PC-3 (cell line): ENCODE measurements at regions of chr12 and their contacts with region 1.

Region 1: GRCh38 chr12:118979763-118980406 is 1.5 kb upstream of the SRRM4 start:
- DNase-seq: peak; percentile 70
- ATAC-seq: peak; percentile 51
- H3K4me3 ChIP-seq: no peak overlapping the region
- H3K27ac ChIP-seq: no peak overlapping the region
- H3K4me1 ChIP-seq: no peaks in the 10 kb centered on the region
- H3K27me3 ChIP-seq: peaks cover 19% of the 10 kb centered on the region
- CTCF ChIP-seq: peak; percentile 86

Region 2: DNA sequence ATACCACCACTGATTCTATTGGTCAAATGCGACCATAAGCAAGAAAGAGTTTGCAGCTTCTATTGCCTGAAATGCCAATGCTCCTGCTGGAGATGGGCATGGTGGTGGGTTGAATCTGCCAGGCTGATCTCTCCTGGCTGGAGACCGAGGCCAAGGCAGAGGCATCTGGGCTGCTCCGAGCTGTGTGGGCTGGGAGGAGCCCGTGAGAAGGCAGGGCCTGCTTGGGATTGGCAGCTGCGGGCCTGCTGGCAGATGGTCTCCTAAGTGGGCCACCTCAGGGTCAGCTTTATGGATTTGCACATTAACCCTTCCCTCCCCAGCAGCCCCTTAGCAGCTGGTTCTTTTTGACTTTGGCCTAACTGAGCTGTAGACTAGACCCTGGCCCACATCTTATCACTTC is 26.9 kb after region 1 on chr12:
- CTCF ChIA-PET with region 1: no interaction called
- POLR2A ChIA-PET with region 1: no interaction called
- intact Hi-C with region 1: no loop called
- DNase-seq: no peak
- ATAC-seq: no peak
- H3K4me3 ChIP-seq: no peak overlapping the region
- H3K27ac ChIP-seq: no peak overlapping the region
- H3K4me1 ChIP-seq: no peaks in the 10 kb centered on the region
- H3K27me3 ChIP-seq: peaks cover 10% of the 10 kb centered on the region; the same call in 1 of the 2 replicates
- CTCF ChIP-seq: no peak

Region 3: GRCh38 chr12:119113496-119113986 is 133.7 kb after region 1 on chr12:
- CTCF ChIA-PET with region 1: no interaction called
- POLR2A ChIA-PET with region 1: no interaction called
- intact Hi-C with region 1: no loop called
- DNase-seq: no peak
- ATAC-seq: no peak
- H3K4me3 ChIP-seq: no peak overlapping the region
- H3K27ac ChIP-seq: no peak overlapping the region
- H3K4me1 ChIP-seq: no peaks in the 10 kb centered on the region
- H3K27me3 ChIP-seq: peaks cover 10% of the 10 kb centered on the region
- CTCF ChIP-seq: no peak

Region 4: DNA sequence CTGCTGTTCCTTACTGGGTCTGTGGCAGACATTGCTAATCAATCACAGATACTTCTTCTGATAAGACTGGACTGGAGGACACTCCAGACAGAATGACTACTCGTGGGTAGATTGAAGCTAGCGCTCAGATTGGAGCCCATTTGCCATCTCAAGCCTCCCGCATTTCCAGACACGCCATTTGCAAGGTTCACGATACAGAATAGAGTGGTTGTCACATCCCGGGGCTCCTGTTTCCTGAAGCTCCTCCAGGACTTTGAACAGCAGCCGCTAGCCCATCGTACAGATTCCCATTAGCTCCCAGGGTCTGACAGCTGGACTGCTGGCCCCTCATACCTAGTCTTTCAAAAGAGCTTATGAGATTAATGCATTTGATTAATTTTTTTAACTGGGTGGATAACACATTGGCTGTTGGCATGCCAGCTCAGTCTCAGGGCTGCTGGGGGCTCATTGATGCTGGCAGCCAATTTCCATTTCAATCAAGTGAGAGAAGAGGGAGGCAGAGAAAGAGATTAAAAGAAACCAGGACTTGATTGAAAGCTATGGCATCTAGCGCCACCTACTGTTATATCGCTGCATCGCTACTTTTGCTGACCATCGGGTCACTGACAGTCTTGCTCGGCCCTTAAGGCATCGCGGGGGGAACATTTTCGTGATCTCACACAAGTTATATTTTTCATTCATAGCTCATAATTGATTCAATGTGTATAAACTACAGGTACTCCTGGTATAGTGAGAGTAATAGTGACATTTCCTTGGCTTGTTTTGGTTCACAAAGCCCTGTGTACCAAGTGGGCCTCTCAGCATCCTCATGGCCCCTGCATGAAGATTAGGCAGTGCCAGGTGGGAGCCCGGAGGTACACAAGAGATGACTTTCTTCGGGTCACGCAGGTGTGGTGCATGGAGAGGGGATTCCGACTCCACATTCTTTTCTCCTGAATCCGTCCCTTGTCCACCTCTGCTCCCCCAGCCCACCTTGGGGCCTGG is 433.2 kb after region 1 on chr12:
- CTCF ChIA-PET with region 1: no interaction called
- POLR2A ChIA-PET with region 1: no interaction called
- intact Hi-C with region 1: loop called (anchors 1 kb)
- DNase-seq: peak; percentile 74
- ATAC-seq: peak; percentile 49
- H3K4me3 ChIP-seq: no peak overlapping the region
- H3K27ac ChIP-seq: no peak overlapping the region
- H3K4me1 ChIP-seq: no peaks in the 10 kb centered on the region
- H3K27me3 ChIP-seq: peaks cover 52% of the 10 kb centered on the region
- CTCF ChIP-seq: peak; percentile 90